HEK293 (cell line): ENCODE measurements at regions of chr6 and their contacts with region 1.

Region 1: DNA sequence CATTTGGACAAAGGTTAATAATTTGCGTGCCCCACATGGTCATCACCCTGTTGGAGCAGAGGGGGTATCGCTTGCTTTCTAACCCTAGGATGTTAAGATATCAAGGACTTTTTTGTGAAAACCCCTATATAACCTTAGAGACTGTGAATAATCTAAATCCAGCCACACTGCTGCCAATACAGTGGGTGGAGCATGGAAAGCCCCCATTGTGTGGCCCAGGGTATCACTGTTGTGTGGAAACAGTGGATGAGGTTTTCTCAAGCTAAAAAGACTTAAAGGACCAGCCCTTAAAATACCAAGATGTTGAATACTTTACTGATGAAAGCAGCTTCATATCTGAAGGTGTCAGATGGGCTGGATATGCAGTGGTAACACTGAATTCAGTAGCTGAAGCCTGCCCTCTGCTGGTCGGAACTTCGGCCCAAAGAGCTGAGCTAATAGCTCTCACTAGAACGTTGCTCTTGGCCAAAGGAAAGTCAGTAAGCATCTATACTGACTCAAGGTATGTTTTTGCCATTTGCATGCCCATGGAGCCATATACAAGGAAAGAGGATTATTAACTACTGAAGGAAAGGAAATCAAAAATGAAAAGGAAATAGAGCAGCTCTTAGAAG is 695.2 kb downstream of the PHF3 start:
- H3K4me3 ChIP-seq: no peak overlapping the region
- H3K27ac ChIP-seq: no peak overlapping the region
- H3K4me1 ChIP-seq: no peaks in the 10 kb centered on the region
- CTCF ChIP-seq: no peak

Region 2: GRCh38 chr6:63923139-63923739 is 407.6 kb before region 1 on chr6:
- CTCF ChIA-PET with region 1: interaction called, 19 read pairs
- POLR2A ChIA-PET with region 1: no interaction called
- H3K4me3 ChIP-seq: no peak overlapping the region
- H3K27ac ChIP-seq: no peak overlapping the region
- H3K4me1 ChIP-seq: no peaks in the 10 kb centered on the region
- CTCF ChIP-seq: no peak

Region 3: GRCh38 chr6:64012351-64013001 is 318.3 kb before region 1 on chr6:
- CTCF ChIA-PET with region 1: interaction called, 109 read pairs
- POLR2A ChIA-PET with region 1: no interaction called
- H3K4me3 ChIP-seq: no peak overlapping the region
- H3K27ac ChIP-seq: no peak overlapping the region
- H3K4me1 ChIP-seq: no peaks in the 10 kb centered on the region
- CTCF ChIP-seq: peak; percentile 23; the same call in 1 of the 2 replicates

Region 4: DNA sequence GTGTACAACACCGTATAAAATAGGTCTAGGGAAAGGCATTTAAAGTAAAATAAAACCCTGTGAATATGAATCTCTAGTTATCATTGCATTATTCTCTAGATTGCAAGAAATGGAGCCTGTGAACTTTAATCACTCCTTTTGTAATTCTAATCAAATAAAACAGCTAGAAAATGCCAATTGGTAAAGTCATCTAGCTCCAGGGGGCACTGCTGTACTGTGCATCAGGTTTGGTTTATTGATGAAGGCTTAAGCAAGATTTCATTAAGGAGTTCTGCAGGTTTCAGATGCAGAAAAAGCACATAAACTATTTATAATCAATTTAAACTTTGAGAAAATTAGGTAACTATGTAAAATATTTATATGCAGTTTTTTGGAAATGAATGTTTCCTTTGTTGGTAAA is 50.2 kb before region 1 on chr6:
- CTCF ChIA-PET with region 1: interaction called, 14 read pairs
- POLR2A ChIA-PET with region 1: no interaction called
- H3K4me3 ChIP-seq: no peak overlapping the region
- H3K27ac ChIP-seq: no peak overlapping the region
- H3K4me1 ChIP-seq: no peaks in the 10 kb centered on the region
- CTCF ChIP-seq: no peak

Region 5: GRCh38 chr6:64712606-64713005 is 381.8 kb after region 1 on chr6:
- CTCF ChIA-PET with region 1: no interaction called
- POLR2A ChIA-PET with region 1: no interaction called
- H3K4me3 ChIP-seq: no peak overlapping the region
- H3K27ac ChIP-seq: no peak overlapping the region
- H3K4me1 ChIP-seq: no peaks in the 10 kb centered on the region
- CTCF ChIP-seq: no peak